ENCODE measurements at regions of chr12 and their contacts with region 1.

Region 1: DNA sequence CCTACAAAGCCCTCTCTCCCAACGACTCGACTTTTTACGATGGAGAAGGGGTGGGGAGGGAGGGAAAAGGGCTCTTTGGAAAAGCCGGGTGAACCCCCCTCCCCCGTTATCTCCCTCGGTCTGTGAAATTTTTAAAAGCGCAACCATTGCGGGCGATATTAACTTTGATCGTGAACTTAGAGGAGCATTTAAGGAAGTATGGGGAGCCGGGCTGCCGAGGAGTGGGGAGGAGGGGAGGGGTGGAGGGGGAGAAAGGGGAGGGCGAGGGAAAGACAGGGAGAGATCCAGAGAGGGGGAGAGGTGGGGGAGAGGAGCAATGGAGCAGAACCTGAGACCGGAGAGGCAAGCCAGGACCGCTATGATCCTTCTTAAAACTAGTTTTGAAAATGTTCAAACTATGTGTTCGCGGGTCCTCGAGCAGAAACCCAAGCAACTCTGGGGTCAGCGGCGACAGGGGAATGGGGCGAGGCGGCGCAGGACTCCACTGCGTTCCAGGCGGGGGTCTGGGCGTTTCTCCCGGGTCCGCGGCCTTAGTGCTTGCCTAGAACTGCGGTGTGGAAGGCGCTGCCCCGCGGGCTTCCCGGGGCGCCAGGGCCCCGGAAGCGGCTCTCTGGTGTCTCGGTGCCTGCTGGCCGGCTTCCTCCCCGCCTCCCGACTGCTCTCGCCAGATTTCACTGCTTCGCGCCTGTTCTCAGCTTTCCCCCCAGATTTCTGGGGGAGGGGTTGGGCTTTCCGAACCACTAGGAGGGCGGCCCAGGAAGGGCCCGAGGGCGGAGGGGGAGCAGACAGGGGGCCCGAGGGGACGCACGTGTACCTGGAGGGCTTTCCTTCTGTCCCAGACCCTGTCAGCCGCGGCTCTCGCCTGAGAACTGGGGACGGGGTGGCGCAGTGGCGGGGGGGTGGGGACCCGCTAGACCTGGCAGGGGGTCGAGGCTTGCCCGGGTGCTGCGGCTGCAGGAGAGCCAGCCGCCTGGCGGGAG is at the start of gene HOTAIR:
- DNase-seq: peak; percentile 56
- ATAC-seq: peak; percentile 45
- H3K4me3 ChIP-seq: peak within 1 kb of the TSS in 4 of 5 experiments; percentile 18 to 54 (median 40)
- H3K4me3 Mint-ChIP-seq: peak within 1 kb of the TSS; percentile 74
- H3K27ac ChIP-seq: no peak within 1 kb of the TSS
- H3K27ac Mint-ChIP-seq: peak within 1 kb of the TSS; percentile 62
- H3K4me1 ChIP-seq: peaks cover 25 to 41% of the 10 kb centered on the region in 2 donors
- H3K4me1 Mint-ChIP-seq: peaks cover 21% of the 10 kb centered on the region
- H3K27me3 ChIP-seq: peaks cover 0 to 98% (median 85%) of the 10 kb centered on the region in 4 experiments
- H3K27me3 Mint-ChIP-seq: peaks cover 85% of the 10 kb centered on the region
- CTCF ChIP-seq: no peak
- total RNA-seq, gene HOTAIR: not detected in 2 replicates

Region 2: GRCh38 chr12:53952871-53953734 is 21.3 kb before region 1 on chr12:
- CTCF ChIA-PET with region 1: no interaction called
- POLR2A ChIA-PET with region 1: no interaction called
- intact Hi-C with region 1: loop called (anchors 2 kb)
- DNase-seq: peak; percentile 50
- ATAC-seq: no peak
- H3K4me3 ChIP-seq: no peak overlapping the region
- H3K4me3 Mint-ChIP-seq: no peak overlapping the region
- H3K27ac ChIP-seq: no peak overlapping the region
- H3K27ac Mint-ChIP-seq: no peak overlapping the region
- H3K4me1 ChIP-seq: peaks cover 14 to 55% of the 10 kb centered on the region in 2 donors
- H3K4me1 Mint-ChIP-seq: peaks cover 17% of the 10 kb centered on the region
- H3K27me3 ChIP-seq: peaks cover 0 to 98% (median 82%) of the 10 kb centered on the region in 4 experiments
- H3K27me3 Mint-ChIP-seq: peaks cover 70% of the 10 kb centered on the region
- CTCF ChIP-seq: no peak

Region 3: GRCh38 chr12:53995378-53996239 is 21.2 kb after region 1 on chr12:
- CTCF ChIA-PET with region 1: no interaction called
- POLR2A ChIA-PET with region 1: interaction called, 12 read pairs
- intact Hi-C with region 1: no loop called
- DNase-seq: peak; percentile 62
- ATAC-seq: peak; percentile 43
- H3K4me3 ChIP-seq: peak overlapping the region in 4 of 5 experiments; percentile 44 to 60 (median 58)
- H3K4me3 Mint-ChIP-seq: peak overlapping the region; percentile 89
- H3K27ac ChIP-seq: no peak overlapping the region
- H3K27ac Mint-ChIP-seq: peak overlapping the region; percentile 47
- H3K4me1 ChIP-seq: peaks cover 37 to 70% of the 10 kb centered on the region in 2 donors
- H3K4me1 Mint-ChIP-seq: peaks cover 35% of the 10 kb centered on the region
- H3K27me3 ChIP-seq: peaks cover 0 to 98% (median 84%) of the 10 kb centered on the region in 4 experiments
- H3K27me3 Mint-ChIP-seq: peaks cover 87% of the 10 kb centered on the region
- CTCF ChIP-seq: no peak

Region 4: DNA sequence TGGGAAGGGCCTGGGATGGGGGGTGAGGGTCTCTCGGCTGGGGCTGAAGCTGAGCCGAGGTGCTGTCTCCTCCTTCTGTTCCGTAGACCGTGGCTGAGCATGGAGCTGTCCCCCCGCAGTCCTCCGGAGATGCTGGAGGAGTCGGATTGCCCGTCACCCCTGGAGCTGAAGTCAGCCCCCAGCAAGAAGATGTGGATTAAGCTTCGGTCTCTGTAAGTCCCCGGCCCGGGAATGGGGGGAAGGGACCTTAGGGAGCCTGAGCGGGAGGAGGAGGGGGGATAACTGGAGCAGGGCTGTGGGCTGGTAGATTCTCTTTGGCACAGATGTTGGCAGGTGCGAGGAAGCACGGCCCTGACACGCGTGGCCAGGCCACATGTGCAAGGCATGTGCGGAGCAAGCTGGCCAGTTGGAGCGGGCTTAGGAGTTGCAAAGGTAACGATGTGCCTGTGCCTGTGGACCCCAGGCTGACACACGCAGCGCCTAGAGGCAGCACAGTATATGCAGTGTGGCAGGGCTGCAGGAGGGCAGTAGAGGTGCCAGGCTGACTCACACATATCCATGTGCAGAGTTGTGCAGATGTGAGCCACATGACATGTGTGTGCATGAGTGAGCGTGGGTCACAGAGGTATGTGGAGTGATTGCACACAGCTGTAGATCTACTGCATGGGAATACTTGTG is 575.5 kb after region 1 on chr12:
- CTCF ChIA-PET with region 1: no interaction called
- POLR2A ChIA-PET with region 1: no interaction called
- intact Hi-C with region 1: no loop called
- DNase-seq: peak; percentile 39
- ATAC-seq: peak; percentile 59
- H3K4me3 ChIP-seq: peak overlapping the region in 4 of 5 experiments; percentile 32 to 54 (median 50)
- H3K4me3 Mint-ChIP-seq: peak overlapping the region; percentile 85
- H3K27ac ChIP-seq: no peak overlapping the region
- H3K27ac Mint-ChIP-seq: peak overlapping the region; percentile 47
- H3K4me1 ChIP-seq: peaks cover 17 to 20% of the 10 kb centered on the region in 2 donors
- H3K4me1 Mint-ChIP-seq: peaks cover 26% of the 10 kb centered on the region
- H3K27me3 ChIP-seq: peaks cover 0 to 13% (median 6%) of the 10 kb centered on the region in 4 experiments
- H3K27me3 Mint-ChIP-seq: peaks cover 8% of the 10 kb centered on the region
- CTCF ChIP-seq: no peak

Measured in B cell (primary cell).